PC-9 (cell line): ENCODE measurements at regions of chr3 and their contacts with region 1.

Region 1: DNA sequence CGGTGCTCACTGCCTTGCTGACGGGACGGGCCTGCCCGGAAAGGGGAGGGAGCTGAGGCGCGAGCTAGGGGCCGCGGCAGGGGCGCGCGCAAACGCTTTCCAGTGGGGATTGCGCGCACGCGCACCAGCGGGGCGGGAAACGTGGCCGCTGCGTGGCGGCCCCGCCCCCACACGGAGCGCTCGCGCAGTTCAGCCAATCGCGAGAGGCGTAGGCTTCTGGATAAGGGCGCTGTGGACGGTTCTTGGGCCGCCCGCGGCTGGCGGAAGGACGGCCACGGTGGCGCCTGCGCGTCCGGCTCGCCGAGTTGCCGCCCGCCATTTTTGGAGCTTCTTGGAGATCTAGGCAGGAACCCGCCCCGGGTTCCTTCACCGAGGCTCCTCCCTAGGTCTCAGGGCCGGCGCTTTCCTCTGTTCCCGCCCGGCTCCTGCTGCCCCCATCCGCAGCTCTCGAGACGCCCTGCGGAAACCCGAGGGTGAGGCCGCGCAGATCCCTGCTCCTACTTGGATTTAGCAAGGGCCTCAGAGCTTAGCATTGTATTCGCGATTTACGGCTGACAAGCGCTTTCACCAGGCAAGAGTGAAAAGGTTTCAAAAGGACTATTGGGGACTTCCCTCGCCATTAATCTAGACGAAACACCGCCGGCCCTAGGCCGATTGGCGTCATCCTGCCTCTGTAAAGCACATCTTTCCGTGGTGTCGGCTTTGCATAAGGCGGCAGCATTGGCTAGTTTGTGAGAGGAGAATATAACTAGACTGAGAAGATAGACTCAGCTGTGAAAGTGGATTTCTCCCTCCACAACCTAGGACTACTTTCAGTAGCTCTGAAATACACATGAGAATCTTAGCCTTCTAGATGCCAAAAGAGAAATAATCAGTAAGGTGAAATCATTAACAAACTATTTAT is 496 bp upstream of the STAG1 start:
- DNase-seq: peak; percentile 91 to 100
- H3K4me3 ChIP-seq: peak overlapping the region; percentile 94
- H3K27ac ChIP-seq: peak overlapping the region; percentile 90
- H3K4me1 ChIP-seq: peaks cover 36% of the 10 kb centered on the region
- H3K27me3 ChIP-seq: no peaks in the 10 kb centered on the region
- CTCF ChIP-seq: no peak

Region 2: DNA sequence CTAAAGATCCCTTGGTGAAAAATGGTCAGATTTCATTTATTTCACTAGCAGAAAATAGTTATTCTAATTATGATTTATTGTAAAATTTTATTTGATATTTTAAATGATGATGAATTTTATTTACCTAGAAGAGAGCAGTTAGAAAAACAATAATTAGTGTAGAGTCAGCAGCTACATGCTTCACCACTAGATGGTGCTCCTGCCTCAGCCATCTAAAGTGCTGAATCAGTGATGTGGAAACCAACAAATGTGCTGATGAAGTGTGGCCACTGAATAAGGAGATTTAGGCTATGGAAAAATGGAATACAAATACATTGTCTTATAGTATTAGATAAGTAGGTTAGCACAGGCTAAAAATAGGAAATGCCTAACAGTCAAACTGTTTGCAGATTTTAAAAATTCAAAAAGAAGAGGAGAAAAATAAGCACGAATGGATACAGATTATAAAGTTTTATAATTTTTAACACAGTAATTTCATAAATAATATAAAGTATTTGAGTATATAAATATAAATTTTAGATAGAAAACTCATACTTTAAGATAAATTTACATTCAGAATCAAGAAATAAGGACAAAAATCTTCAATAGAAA is 677.4 kb before region 1 on chr3:
- CTCF ChIA-PET with region 1: interaction called, 10 read pairs
- POLR2A ChIA-PET with region 1: no interaction called
- intact Hi-C with region 1: loop called (anchors 1 kb)
- DNase-seq: peak; percentile 38 to 58
- H3K4me3 ChIP-seq: no peak overlapping the region
- H3K27ac ChIP-seq: no peak overlapping the region
- H3K4me1 ChIP-seq: no peaks in the 10 kb centered on the region
- H3K27me3 ChIP-seq: no peaks in the 10 kb centered on the region
- CTCF ChIP-seq: peak; percentile 95

Region 3: DNA sequence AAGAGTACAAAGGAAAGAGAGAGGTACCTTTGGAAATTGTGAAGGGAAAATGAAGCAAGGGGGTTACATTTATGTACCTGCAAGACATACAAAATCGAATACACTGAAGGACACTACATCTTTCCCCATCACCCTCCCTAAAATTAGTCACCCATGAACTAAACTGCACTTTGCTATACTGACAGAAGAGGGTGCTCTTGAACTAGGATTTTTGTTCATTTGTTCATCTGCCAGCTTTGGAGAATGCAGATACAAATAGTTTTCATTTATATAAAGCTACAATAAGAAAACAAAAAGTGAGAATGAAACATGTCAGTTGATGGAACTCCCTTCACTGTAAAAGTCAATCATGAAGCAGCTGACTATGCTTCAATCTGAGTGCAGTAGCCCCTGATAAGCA is 446.8 kb before region 1 on chr3:
- CTCF ChIA-PET with region 1: interaction called, 22 read pairs
- POLR2A ChIA-PET with region 1: interaction called, 3 read pairs
- intact Hi-C with region 1: loop called (anchors 2 kb)
- DNase-seq: peak; percentile 7 to 36
- H3K4me3 ChIP-seq: no peak overlapping the region
- H3K27ac ChIP-seq: no peak overlapping the region
- H3K4me1 ChIP-seq: no peaks in the 10 kb centered on the region
- H3K27me3 ChIP-seq: no peaks in the 10 kb centered on the region
- CTCF ChIP-seq: peak; percentile 75

Region 4: DNA sequence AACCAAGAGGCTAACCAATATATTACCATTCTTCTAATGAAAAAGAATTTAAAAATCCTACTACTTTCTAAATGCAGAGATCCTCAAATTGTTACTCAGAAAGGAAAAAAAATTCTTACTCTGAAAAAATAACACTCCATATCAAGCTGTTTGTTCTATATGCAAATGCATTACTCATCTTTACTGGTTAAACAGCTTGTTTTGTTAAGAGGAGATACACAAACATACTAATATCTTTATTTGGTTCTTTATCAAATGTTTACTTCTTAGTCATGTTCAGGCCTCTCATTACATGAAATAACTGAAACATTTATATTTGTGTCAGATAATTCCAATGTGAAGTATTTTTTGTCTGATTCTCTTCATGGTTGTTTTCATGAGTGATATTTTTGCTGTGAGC is 355.8 kb before region 1 on chr3:
- CTCF ChIA-PET with region 1: interaction called, 30 read pairs
- POLR2A ChIA-PET with region 1: interaction called, 3 read pairs
- intact Hi-C with region 1: no loop called
- DNase-seq: no peak
- H3K4me3 ChIP-seq: no peak overlapping the region
- H3K27ac ChIP-seq: 0 out of 2 replicates have a peak overlapping the region, but pooled peaks have one; percentile 29
- H3K4me1 ChIP-seq: no peaks in the 10 kb centered on the region
- H3K27me3 ChIP-seq: no peaks in the 10 kb centered on the region
- CTCF ChIP-seq: no peak

Region 5: DNA sequence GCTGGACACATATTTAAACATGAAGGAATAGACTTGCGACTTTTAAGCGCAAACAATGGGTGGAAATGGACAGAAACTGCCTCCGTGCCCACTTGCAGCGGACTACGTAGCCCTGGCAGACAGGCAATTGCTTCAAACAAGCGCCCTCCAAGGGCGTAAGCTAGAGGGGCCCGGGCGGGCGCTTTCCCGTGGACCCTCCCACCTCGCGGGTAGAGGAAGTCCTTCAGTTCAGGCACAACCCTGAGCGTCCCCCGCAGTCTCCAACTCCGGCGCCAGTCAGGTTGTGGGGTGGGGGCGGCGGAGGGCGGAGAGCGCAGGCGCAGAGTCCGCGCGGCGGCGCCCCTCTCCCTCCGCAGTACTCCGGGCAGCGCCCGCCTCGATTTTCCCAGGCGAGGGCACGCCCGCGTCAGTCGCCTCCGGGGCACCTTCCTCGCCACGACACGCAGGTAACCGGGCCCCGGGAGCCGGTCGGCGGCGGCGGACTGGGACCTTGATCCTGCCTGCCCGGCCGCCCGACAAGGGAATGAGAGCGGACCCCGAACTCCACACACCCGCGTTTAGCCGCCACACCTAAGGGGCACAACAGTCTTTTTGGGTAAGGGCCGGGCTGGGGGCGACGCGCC is 66.2 kb after region 1 on chr3 and contains the start of gene SLC35G2:
- CTCF ChIA-PET with region 1: interaction called, 3 read pairs
- POLR2A ChIA-PET with region 1: interaction called, 3 read pairs
- intact Hi-C with region 1: loop called (anchors 2 kb)
- DNase-seq: peak in 1 of 2 experiments; percentile 40
- H3K4me3 ChIP-seq: peak within 1 kb of the TSS; percentile 67
- H3K27ac ChIP-seq: peak within 1 kb of the TSS; percentile 53
- H3K4me1 ChIP-seq: peaks cover 19% of the 10 kb centered on the region
- H3K27me3 ChIP-seq: no peaks in the 10 kb centered on the region
- CTCF ChIP-seq: 0 out of 2 replicates have a peak, but pooled peaks have one; percentile 17
- total RNA-seq, gene SLC35G2: 3.1 and 5.0 TPM in 2 replicates

Region 6: DNA sequence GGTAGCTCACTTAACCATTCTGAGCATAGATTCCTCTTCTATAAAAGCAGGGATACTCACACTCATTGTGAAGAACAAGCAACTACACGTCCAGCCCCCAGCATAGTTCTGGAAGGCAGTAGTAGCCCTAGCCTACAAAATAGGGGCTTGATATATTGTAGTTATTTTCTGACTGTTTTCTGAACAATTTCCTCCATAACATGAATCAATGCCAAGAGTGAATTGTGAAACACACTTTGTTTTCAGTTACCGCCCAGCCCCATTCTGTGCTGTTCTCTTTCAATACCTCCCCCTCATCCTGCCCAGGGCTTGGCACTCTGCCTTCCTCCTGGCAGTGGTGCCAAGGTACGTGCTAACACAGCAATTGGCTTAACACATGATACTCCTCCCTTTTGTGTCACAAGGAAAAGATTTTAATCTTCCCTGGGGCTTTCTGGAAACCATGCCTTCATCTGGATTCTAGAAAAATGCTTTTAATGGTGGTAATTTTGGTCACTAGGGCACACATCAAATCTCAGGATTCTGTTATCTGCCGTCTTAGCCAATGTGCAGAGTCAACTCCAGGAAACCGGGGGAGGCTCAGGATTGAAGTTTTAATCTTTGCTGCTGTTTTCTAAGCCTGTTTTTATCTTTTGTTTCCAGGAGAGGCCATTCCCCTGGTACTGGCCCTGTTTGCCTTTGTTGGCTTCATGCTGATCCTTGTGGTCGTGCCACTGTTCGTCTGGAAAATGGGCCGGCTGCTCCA is 242.3 kb after region 1 on chr3:
- CTCF ChIA-PET with region 1: no interaction called
- POLR2A ChIA-PET with region 1: no interaction called
- intact Hi-C with region 1: loop called (anchors 5 kb)
- DNase-seq: peak; percentile 79 to 86
- H3K4me3 ChIP-seq: no peak overlapping the region
- H3K27ac ChIP-seq: peak overlapping the region; percentile 40; the same call in 1 of the 2 replicates
- H3K4me1 ChIP-seq: peaks cover 16% of the 10 kb centered on the region
- H3K27me3 ChIP-seq: no peaks in the 10 kb centered on the region
- CTCF ChIP-seq: no peak